Activated CD4-positive, alpha-beta T cell treated with anti-CD3 and anti-CD28 coated beads for 36 hours (primary cell): ENCODE measurements at regions of chr12 and their contacts with region 1.

Region 1: GRCh38 chr12:53065975-53066931 is 12.9 kb downstream of the SPRYD3 start:
- DNase-seq: peak; percentile 85
- ATAC-seq: peak; percentile 78
- H3K4me3 Mint-ChIP-seq: no peak overlapping the region
- H3K27ac Mint-ChIP-seq: peak overlapping the region; percentile 48
- H3K4me1 Mint-ChIP-seq: peaks cover 7% of the 10 kb centered on the region
- H3K27me3 Mint-ChIP-seq: no peaks in the 10 kb centered on the region

Region 2: DNA sequence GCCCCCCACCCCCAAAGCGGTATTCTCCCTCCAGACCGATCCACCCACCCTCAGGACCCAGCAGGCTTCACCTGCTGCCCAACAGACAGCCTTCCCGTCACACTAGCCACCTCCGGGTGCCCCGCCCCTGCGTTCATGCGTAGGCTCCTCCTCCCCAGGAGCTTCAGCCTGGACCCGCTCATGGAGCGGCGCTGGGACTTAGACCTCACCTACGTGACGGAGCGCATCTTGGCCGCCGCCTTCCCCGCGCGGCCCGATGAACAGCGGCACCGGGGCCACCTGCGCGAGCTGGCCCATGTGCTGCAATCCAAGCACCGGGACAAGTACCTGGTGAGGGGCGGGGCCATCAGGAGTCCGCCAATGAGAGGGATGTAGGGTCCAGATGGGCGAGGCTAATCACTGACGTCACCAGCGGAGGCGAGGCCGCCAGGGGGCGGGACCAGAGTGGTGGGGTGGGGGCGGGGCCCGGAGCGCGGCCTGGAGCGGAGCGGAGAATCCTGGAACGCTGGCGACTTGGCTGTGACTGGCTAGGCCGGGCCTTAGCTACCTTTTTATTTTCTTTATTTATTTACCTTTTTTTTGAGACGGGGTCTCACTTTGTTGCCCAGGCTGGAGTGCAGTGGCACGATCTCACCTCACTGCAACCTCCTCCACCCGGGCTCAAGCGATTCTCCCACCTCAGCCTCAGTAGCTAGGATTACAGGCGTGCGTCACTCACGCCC is 12.0 kb before region 1 on chr12:
- CTCF ChIA-PET with region 1: interaction called, 22 read pairs
- POLR2A ChIA-PET with region 1: no interaction called
- intact Hi-C with region 1: no loop called
- DNase-seq: peak; percentile 96
- ATAC-seq: peak; percentile 94
- H3K4me3 Mint-ChIP-seq: peak overlapping the region; percentile 86
- H3K27ac Mint-ChIP-seq: peak overlapping the region; percentile 84
- H3K4me1 Mint-ChIP-seq: peaks cover 14% of the 10 kb centered on the region
- H3K27me3 Mint-ChIP-seq: no peaks in the 10 kb centered on the region

Region 3: GRCh38 chr12:53079226-53080117 is 13.2 kb after region 1 on chr12 and contains the start of gene SPRYD3:
- CTCF ChIA-PET with region 1: interaction called, 155 read pairs
- POLR2A ChIA-PET with region 1: interaction called, 6 read pairs
- intact Hi-C with region 1: no loop called
- DNase-seq: peak; percentile 98
- ATAC-seq: peak; percentile 98
- H3K4me3 Mint-ChIP-seq: peak within 1 kb of the TSS; percentile 80
- H3K27ac Mint-ChIP-seq: peak within 1 kb of the TSS; percentile 74
- H3K4me1 Mint-ChIP-seq: peaks cover 33% of the 10 kb centered on the region
- H3K27me3 Mint-ChIP-seq: no peaks in the 10 kb centered on the region
- total RNA-seq, gene SPRYD3: 13.7 to 18.2 TPM

Region 4: GRCh38 chr12:53098982-53099651 is 32.9 kb after region 1 on chr12:
- CTCF ChIA-PET with region 1: interaction called, 277 read pairs
- POLR2A ChIA-PET with region 1: interaction called, 4 read pairs
- intact Hi-C with region 1: loop called (anchors 1 kb)
- DNase-seq: peak; percentile 95
- ATAC-seq: peak; percentile 59
- H3K4me3 Mint-ChIP-seq: peak overlapping the region; percentile 72
- H3K27ac Mint-ChIP-seq: peak overlapping the region; percentile 89
- H3K4me1 Mint-ChIP-seq: peaks cover 43% of the 10 kb centered on the region
- H3K27me3 Mint-ChIP-seq: peaks cover 12% of the 10 kb centered on the region

Region 5: GRCh38 chr12:53190108-53190729 is 124.0 kb after region 1 on chr12:
- CTCF ChIA-PET with region 1: interaction called, 5 read pairs
- POLR2A ChIA-PET with region 1: interaction called, 3 read pairs
- intact Hi-C with region 1: loop called in 1 of 2 experiments (anchors 10 kb)
- DNase-seq: peak; percentile 74
- ATAC-seq: peak; percentile 94
- H3K4me3 Mint-ChIP-seq: no peak overlapping the region
- H3K27ac Mint-ChIP-seq: peak overlapping the region; percentile 17
- H3K4me1 Mint-ChIP-seq: peaks cover 14% of the 10 kb centered on the region
- H3K27me3 Mint-ChIP-seq: no peaks in the 10 kb centered on the region

Region 6: GRCh38 chr12:53200458-53201176 is 134.4 kb after region 1 on chr12:
- CTCF ChIA-PET with region 1: interaction called, 7 read pairs
- POLR2A ChIA-PET with region 1: no interaction called
- intact Hi-C with region 1: loop called (anchors 1 to 10 kb)
- DNase-seq: peak; percentile 68
- ATAC-seq: peak; percentile 52
- H3K4me3 Mint-ChIP-seq: peak overlapping the region; percentile 44
- H3K27ac Mint-ChIP-seq: peak overlapping the region; percentile 90
- H3K4me1 Mint-ChIP-seq: peaks cover 74% of the 10 kb centered on the region
- H3K27me3 Mint-ChIP-seq: no peaks in the 10 kb centered on the region